ENCODE measurements at regions of chr12 and their contacts with region 1.

Region 1: GRCh38 chr12:124906606-124907261 is 7.7 kb downstream of the UBC start:
- DNase-seq: peak; percentile 85 to 95 (median 90)
- H3K4me3 ChIP-seq: no peak overlapping the region
- H3K4me3 Mint-ChIP-seq: no peak overlapping the region
- H3K27ac ChIP-seq: no peak overlapping the region
- H3K27ac Mint-ChIP-seq: peak overlapping the region in 6 of 7 donors; percentile 12 to 81 (median 64)
- H3K4me1 ChIP-seq: peaks cover 33% of the 10 kb centered on the region
- H3K4me1 Mint-ChIP-seq: peaks cover 25 to 29% (median 26%) of the 10 kb centered on the region in 4 donors
- H3K27me3 ChIP-seq: no peaks in the 10 kb centered on the region
- H3K27me3 Mint-ChIP-seq: no peaks in the 10 kb centered on the region

Region 2: GRCh38 chr12:124567661-124568373 is 338.9 kb before region 1 on chr12:
- CTCF ChIA-PET with region 1: no interaction called
- POLR2A ChIA-PET with region 1: no interaction called
- intact Hi-C with region 1: loop called (anchors 5 kb)
- DNase-seq: peak; percentile 83 to 86 (median 84)
- H3K4me3 ChIP-seq: peak overlapping the region in 1 of 2 donors; percentile 59
- H3K4me3 Mint-ChIP-seq: peak overlapping the region; percentile 82 to 90 (median 88)
- H3K27ac ChIP-seq: no peak overlapping the region
- H3K27ac Mint-ChIP-seq: peak overlapping the region; percentile 72 to 92 (median 85)
- H3K4me1 ChIP-seq: peaks cover 36% of the 10 kb centered on the region
- H3K4me1 Mint-ChIP-seq: peaks cover 12 to 44% (median 21%) of the 10 kb centered on the region in 4 donors
- H3K27me3 ChIP-seq: no peaks in the 10 kb centered on the region
- H3K27me3 Mint-ChIP-seq: no peaks in the 10 kb centered on the region

Region 3: DNA sequence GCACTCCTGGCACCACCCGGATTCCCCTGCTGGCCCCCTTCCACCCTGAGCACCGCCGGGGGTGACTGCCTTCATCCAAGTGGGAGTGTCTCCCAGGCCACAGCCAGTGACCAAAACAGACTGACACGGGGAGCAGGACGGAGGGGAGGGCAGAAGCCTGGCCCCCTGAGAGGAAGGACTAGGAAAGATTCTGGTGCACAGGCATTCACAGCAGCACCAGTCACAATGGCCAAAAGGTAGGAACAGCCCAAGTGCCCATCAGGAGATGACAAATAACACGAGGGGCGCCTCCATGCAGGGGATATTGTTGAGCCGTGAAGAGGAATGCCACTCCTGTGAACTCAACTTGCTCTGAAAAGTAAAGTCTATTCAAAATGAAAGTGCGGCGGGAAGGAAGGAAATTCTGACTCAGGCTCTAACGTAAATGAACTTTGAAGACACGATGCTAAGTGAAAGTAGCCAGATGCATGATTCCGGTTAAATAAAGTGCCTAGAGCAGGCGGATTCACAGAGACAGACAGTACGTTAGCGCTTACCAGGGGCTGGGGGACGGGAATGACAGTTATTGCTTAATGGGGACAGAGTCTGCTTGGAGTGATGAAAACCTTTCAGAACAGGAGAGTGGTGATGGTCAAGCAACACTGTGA is 193.2 kb before region 1 on chr12:
- CTCF ChIA-PET with region 1: no interaction called
- POLR2A ChIA-PET with region 1: no interaction called
- intact Hi-C with region 1: no loop called
- DNase-seq: peak; percentile 52 to 76 (median 64)
- H3K4me3 ChIP-seq: peak overlapping the region; percentile 20 to 54
- H3K4me3 Mint-ChIP-seq: peak overlapping the region; percentile 75 to 95 (median 83)
- H3K27ac ChIP-seq: peak overlapping the region; percentile 25
- H3K27ac Mint-ChIP-seq: peak overlapping the region; percentile 77 to 93 (median 86)
- H3K4me1 ChIP-seq: peaks cover 17% of the 10 kb centered on the region
- H3K4me1 Mint-ChIP-seq: peaks cover 10 to 20% (median 13%) of the 10 kb centered on the region in 4 donors
- H3K27me3 ChIP-seq: no peaks in the 10 kb centered on the region
- H3K27me3 Mint-ChIP-seq: no peaks in the 10 kb centered on the region

Region 4: DNA sequence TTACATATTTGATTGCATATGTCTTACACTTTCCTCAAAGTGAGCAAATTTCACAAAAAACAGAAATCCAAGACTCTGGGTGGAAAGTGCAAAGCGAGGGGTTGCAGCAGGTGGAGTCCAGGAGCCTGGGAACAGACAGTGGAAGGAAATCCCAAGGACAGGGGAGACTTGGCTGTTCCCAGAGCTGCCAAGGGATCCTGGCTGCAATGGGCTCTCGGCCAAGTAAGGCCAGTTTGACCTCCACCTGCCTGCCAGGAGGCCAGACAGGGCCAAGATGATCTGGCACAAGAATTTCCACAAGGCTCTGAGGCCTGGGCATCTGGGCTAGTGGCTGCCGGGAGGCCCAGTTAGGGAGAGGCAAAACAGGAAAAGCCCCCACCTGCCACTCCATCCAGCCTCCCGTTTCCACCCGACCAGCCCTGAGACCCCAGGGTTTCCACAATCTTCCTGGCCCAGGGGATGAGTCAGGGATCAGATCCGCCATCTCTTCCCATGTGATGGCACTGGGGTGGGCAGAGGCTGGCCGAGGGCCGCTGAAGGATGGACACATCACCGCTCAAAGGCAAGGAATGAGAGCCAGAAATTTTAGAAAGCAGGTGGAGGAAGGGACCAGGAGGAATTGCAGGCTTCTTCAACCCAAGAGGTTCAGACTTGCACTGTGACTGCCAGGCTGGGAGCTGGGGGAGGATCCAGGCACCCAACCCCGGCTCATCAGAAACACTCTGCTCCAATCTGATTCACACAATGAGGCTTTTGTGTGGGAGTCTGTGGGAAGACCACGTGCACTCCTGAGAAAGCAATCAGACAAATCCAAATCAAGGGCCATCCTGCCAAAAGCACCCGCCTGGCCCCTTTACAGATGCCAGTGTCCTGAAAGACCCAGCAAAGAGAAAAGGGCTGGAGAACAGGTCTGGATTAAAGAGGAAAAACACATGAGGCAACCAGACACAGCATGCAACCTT is 59.3 kb before region 1 on chr12:
- CTCF ChIA-PET with region 1: no interaction called
- POLR2A ChIA-PET with region 1: no interaction called
- intact Hi-C with region 1: no loop called
- DNase-seq: no peak
- H3K4me3 ChIP-seq: no peak overlapping the region
- H3K4me3 Mint-ChIP-seq: no peak overlapping the region
- H3K27ac ChIP-seq: no peak overlapping the region
- H3K27ac Mint-ChIP-seq: peak overlapping the region in 1 of 7 donors; percentile 65
- H3K4me1 ChIP-seq: no peaks in the 10 kb centered on the region
- H3K4me1 Mint-ChIP-seq: peaks cover 0 to under 1% (median 0%) of the 10 kb centered on the region in 4 donors
- H3K27me3 ChIP-seq: no peaks in the 10 kb centered on the region
- H3K27me3 Mint-ChIP-seq: no peaks in the 10 kb centered on the region

Region 5: GRCh38 chr12:124927201-124928094 is 20.7 kb after region 1 on chr12:
- CTCF ChIA-PET with region 1: interaction called, 26 read pairs
- POLR2A ChIA-PET with region 1: interaction called, 50 read pairs
- intact Hi-C with region 1: no loop called
- DNase-seq: peak; percentile 90 to 94 (median 92)
- H3K4me3 ChIP-seq: peak overlapping the region; percentile 70 to 95
- H3K4me3 Mint-ChIP-seq: peak overlapping the region; percentile 88 to 97 (median 95)
- H3K27ac ChIP-seq: peak overlapping the region; percentile 57
- H3K27ac Mint-ChIP-seq: peak overlapping the region; percentile 91 to 100 (median 99)
- H3K4me1 ChIP-seq: peaks cover 21% of the 10 kb centered on the region
- H3K4me1 Mint-ChIP-seq: peaks cover 18 to 45% (median 29%) of the 10 kb centered on the region in 4 donors
- H3K27me3 ChIP-seq: no peaks in the 10 kb centered on the region
- H3K27me3 Mint-ChIP-seq: peaks cover 4 to 9% of the 10 kb centered on the region in 2 donors

Region 6: DNA sequence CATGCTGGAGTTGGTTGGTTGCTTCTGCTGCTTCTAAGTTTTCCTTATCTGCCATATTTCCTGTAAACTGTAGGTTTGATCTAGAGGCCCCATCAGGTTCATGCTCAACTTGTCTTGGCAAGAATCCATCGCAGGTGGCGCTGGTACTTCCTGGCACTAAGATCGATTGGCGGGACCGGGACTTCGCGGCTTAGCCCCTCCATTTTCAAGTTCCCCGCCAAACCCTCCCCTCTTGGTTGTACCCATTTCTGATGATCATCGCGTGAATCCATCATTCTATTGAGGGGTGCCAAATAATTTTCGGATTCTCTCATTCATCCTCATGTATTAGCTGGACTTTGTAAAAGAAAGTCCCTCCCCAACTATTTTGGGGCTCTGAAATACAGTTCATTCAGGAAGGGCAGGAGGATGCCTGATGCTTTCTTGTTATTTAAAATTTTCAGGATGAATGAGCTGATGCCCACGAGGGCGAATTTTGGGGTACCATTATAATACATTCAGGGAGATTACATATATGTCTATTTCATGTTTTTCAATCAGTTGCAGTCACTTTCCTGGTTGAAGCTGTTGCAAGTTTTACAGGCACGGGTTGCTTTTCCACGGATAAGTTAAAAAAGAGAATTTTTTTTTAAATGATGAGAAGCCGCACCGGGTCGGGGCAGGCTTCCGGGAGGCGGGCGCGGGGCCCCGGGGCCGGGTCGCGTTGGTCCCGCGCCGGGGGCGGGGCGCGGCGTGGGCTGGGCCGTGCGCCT is 86.3 kb after region 1 on chr12:
- CTCF ChIA-PET with region 1: interaction called, 6 read pairs
- POLR2A ChIA-PET with region 1: no interaction called
- intact Hi-C with region 1: loop called (anchors 2 kb)
- DNase-seq: peak; percentile 81 to 91 (median 85)
- H3K4me3 ChIP-seq: peak overlapping the region; percentile 78 to 90
- H3K4me3 Mint-ChIP-seq: peak overlapping the region; percentile 84 to 92 (median 88)
- H3K27ac ChIP-seq: peak overlapping the region; percentile 41
- H3K27ac Mint-ChIP-seq: peak overlapping the region; percentile 79 to 95 (median 85)
- H3K4me1 ChIP-seq: peaks cover 35% of the 10 kb centered on the region
- H3K4me1 Mint-ChIP-seq: peaks cover 19 to 41% (median 33%) of the 10 kb centered on the region in 4 donors
- H3K27me3 ChIP-seq: no peaks in the 10 kb centered on the region
- H3K27me3 Mint-ChIP-seq: no peaks in the 10 kb centered on the region

Region 7: DNA sequence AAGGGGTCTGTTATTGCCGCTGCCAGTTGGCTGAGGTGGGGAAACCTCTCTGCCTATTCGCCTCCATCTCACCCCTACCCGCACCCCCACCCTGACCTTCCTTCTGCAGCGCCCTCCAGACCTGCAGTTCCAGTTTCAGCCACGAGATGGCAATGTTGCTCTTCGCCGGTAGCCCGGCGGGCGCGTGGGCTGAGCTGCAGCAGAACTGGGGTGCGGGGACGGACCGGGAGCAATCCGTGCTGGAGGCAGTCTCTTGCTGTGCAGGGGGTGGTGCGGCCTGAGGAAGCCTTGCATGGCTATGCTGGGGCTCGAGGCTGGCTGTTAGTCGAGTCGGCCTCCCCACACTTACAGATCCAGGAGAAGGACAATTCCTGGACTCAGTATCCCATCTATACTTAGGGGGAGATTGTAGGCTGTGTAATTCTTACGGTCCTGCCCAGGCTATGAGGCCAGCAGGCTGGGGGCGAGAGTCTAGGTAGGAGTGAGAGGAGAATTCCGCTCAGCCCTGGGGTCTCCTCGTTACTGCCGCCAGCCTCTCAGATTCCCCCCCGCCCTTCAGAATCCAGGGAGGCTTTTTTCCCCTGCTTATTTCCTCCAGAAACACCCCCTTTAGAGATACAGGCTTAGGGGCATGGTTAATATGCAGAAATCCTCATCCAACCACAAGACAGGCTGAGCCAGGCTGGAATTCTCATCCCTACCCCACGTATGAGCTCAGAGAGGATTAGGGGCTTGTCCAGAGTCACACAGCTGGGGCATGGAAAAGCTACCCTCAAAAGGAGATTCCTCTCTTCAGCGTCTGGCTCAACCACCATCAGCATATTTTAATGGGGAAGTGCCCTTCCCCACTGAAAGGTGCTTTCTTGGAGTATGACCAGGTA is 276.7 kb after region 1 on chr12:
- CTCF ChIA-PET with region 1: interaction called, 7 read pairs
- POLR2A ChIA-PET with region 1: no interaction called
- intact Hi-C with region 1: loop called (anchors 1 kb)
- DNase-seq: peak; percentile 51 to 70 (median 62)
- H3K4me3 ChIP-seq: no peak overlapping the region
- H3K4me3 Mint-ChIP-seq: peak overlapping the region in 2 of 8 donors; percentile 34 to 64
- H3K27ac ChIP-seq: no peak overlapping the region
- H3K27ac Mint-ChIP-seq: no peak overlapping the region
- H3K4me1 ChIP-seq: peaks cover 11% of the 10 kb centered on the region
- H3K4me1 Mint-ChIP-seq: peaks cover 3 to 19% (median 9%) of the 10 kb centered on the region in 4 donors
- H3K27me3 ChIP-seq: peaks cover 27% of the 10 kb centered on the region
- H3K27me3 Mint-ChIP-seq: peaks cover 42 to 53% of the 10 kb centered on the region in 2 donors